ENCODE measurements at regions of chr1 and their contacts with region 1.

Region 1: GRCh38 chr1:27416387-27417111 is 24.1 kb downstream of the GPR3 start:
- DNase-seq: peak in 1 of 2 donors; percentile 82
- ATAC-seq: peak; percentile 77 to 85 (median 81)
- H3K4me3 ChIP-seq: no peak overlapping the region
- H3K4me3 Mint-ChIP-seq: no peak overlapping the region
- H3K27ac ChIP-seq: peak overlapping the region; percentile 14
- H3K27ac Mint-ChIP-seq: peak overlapping the region; percentile 69 to 87
- H3K4me1 ChIP-seq: peaks cover 27% of the 10 kb centered on the region
- H3K4me1 Mint-ChIP-seq: peaks cover 34 to 36% of the 10 kb centered on the region in 2 donors
- H3K27me3 ChIP-seq: no peaks in the 10 kb centered on the region
- H3K27me3 Mint-ChIP-seq: no peaks in the 10 kb centered on the region
- CTCF ChIP-seq: peak; percentile 64

Region 2: DNA sequence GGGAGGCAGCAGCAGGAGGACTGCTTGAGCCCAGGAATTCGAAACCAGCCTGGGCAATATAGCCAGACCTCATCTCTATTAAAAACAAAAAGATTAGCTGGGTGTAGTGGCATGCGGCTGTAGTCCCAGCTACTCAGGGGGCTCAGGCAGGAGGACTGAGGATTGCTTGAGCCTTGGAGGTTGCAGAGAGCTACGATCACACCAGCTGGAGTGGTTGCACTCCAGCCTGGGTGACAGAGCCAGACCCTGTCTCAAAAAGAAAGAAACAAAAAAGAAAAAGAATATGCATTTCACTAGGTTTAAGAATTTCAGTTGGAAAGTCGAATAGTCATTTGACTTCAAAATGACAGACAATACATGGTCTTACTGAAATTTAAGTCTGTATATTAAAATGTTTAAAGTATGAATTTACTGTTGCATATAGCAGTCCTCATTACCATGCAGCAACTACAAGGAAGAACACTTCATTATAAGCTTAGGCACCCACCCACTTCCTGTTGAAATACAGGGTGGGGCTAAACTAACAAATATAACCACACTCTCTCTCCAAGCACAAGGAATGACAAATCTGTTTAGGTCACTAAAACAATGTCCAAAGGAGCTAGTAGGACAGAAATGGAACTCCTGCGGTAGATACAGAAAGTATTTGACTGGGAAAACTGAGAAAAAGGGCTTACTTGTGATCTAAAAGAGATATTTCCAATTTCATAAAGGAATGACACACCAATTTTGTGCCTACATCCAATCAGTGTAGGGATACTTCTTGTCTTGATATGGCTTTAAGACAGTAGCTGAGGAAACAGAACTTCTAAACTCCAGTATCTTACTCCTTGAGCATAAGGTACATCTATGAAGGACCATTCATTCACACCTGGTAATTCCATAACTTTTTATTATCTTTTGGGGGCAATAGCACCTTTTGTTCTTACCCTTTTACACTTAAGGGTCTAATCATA is 19.9 kb after region 1 on chr1:
- intact Hi-C with region 1: loop called (anchors 2 kb)
- DNase-seq: peak in 1 of 2 donors; percentile 67
- ATAC-seq: peak; percentile 89 to 91 (median 89)
- H3K4me3 ChIP-seq: peak overlapping the region; percentile 4
- H3K4me3 Mint-ChIP-seq: peak overlapping the region; percentile 87
- H3K27ac ChIP-seq: peak overlapping the region; percentile 68
- H3K27ac Mint-ChIP-seq: peak overlapping the region; percentile 88 to 91
- H3K4me1 ChIP-seq: peaks cover 37% of the 10 kb centered on the region
- H3K4me1 Mint-ChIP-seq: peaks cover 69 to 70% of the 10 kb centered on the region in 2 donors
- H3K27me3 ChIP-seq: no peaks in the 10 kb centered on the region
- H3K27me3 Mint-ChIP-seq: no peaks in the 10 kb centered on the region
- CTCF ChIP-seq: no peak

Region 3: DNA sequence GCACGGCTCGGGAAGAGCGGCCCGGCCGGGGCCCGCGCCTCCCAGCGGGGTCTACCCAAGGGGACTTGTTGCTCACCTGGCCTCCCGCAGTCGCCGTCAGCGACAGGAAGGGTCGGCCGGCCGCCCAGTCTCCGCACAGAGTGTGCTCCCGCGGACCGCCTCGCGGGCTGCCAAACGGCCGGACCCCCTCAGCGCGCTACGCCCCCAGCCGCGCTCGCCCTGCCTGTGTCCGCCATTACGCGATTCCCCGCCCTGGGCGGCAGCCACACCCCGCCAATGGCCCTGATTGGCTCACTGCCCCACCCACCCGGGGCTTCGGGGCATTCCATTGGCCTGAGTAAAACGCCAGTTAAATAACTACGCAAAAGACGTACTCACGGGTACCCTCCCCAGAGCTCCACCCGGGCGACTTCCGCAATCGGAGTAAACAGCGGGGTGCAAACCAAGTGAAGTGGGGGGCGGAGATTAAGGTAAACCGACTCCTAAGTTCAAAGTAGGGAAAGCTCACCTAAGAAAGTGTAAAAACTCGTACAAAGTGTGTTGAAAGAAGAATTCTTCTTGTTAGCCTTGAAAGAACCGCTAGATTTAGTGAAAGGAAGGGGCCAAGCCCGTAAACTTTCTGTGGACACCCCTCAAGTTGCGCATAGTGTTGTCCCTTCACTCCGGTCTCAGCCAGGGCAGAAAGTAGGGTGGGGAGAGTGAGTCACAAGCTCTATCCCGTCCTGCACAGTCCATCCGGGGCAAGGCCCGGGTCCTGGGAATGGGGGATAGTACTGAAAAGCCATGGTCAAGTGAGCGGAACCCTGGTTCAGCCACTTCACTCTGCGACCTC is 73.6 kb after region 1 on chr1 and contains the start of gene WASF2:
- intact Hi-C with region 1: loop called (anchors 5 kb)
- DNase-seq: peak; percentile 95 to 98
- ATAC-seq: peak; percentile 92 to 99 (median 94)
- H3K4me3 ChIP-seq: peak within 1 kb of the TSS; percentile 97
- H3K4me3 Mint-ChIP-seq: peak within 1 kb of the TSS; percentile 99
- H3K27ac ChIP-seq: peak within 1 kb of the TSS; percentile 89
- H3K27ac Mint-ChIP-seq: peak within 1 kb of the TSS; percentile 98 to 99
- H3K4me1 ChIP-seq: peaks cover 31% of the 10 kb centered on the region
- H3K4me1 Mint-ChIP-seq: peaks cover 27 to 29% of the 10 kb centered on the region in 2 donors
- H3K27me3 ChIP-seq: no peaks in the 10 kb centered on the region
- H3K27me3 Mint-ChIP-seq: no peaks in the 10 kb centered on the region
- CTCF ChIP-seq: no peak
- total RNA-seq, gene WASF2: 137 to 153 (median 143) TPM

Measured in natural killer cell (primary cell).